Posterior vena cava (tissue), 2 donors: ENCODE measurements at regions of chr7 and their contacts with region 1.

Region 1: GRCh38 chr7:95865716-95866371 is 93.5 kb downstream of the DYNC1I1 start:
- DNase-seq: no peak

Region 2: GRCh38 chr7:95723592-95724180 is 142.2 kb before region 1 on chr7:
- intact Hi-C with region 1: loop called in 1 of 2 experiments (anchors 2 kb)
- DNase-seq: no peak

Region 3: DNA sequence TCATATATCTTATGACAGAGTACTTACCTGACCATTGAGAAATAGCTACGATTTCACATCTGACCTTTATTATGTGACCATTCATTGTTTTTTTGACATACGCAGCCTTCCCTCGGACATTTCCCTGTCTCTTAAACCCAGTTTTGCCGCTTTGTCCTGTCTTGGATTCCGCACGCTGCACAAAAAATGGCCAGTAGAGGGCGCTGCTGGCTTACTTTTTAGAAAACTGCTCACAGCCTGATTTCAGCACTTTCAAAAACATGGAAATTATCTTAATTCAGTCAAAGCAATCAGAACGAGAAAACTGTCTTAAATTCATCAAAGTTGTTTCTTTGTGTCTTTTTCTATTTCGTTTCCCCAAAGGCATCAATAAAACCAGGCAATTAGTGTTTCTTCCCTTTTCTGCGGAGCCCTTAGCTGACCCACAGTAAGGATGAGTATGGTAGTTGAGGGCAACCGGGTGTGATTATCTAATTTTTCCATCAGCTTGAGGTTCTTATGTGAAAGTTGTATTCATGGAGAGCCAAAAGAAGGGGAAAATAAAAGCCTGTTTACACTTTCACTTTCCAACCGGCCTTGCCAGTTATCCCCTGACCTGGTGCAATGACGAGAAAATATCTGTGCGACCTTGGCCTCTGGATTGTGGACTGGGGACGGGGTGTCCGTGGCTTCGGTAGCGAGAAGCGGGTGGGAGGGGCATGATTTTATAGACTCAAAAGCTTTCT is 50.9 kb after region 1 on chr7:
- intact Hi-C with region 1: no loop called
- DNase-seq: peak; percentile 93